ENCODE measurements at regions of chr17 and their contacts with region 1.

Region 1: GRCh38 chr17:49191917-49192741 is 18.2 kb downstream of the GNGT2 start:
- DNase-seq: peak; percentile 91
- ATAC-seq: peak; percentile 68
- H3K4me3 Mint-ChIP-seq: peak overlapping the region; percentile 96
- H3K27ac Mint-ChIP-seq: peak overlapping the region; percentile 98
- H3K4me1 Mint-ChIP-seq: peaks cover 10% of the 10 kb centered on the region
- H3K27me3 Mint-ChIP-seq: no peaks in the 10 kb centered on the region; the same call in 1 of the 2 replicates
- CTCF ChIP-seq: no peak

Region 2: GRCh38 chr17:49180303-49180702 is 11.8 kb before region 1 on chr17:
- CTCF ChIA-PET with region 1: interaction called, 20 read pairs
- POLR2A ChIA-PET with region 1: interaction called, 3 read pairs
- DNase-seq: peak; percentile 80
- ATAC-seq: peak; percentile 90
- H3K4me3 Mint-ChIP-seq: no peak overlapping the region
- H3K27ac Mint-ChIP-seq: no peak overlapping the region
- H3K4me1 Mint-ChIP-seq: no peaks in the 10 kb centered on the region
- H3K27me3 Mint-ChIP-seq: peaks cover 8% of the 10 kb centered on the region
- CTCF ChIP-seq: peak; percentile 73

Measured in WTC11 (cell line).